ENCODE measurements at regions of chrX and their contacts with region 1.

Region 1: DNA sequence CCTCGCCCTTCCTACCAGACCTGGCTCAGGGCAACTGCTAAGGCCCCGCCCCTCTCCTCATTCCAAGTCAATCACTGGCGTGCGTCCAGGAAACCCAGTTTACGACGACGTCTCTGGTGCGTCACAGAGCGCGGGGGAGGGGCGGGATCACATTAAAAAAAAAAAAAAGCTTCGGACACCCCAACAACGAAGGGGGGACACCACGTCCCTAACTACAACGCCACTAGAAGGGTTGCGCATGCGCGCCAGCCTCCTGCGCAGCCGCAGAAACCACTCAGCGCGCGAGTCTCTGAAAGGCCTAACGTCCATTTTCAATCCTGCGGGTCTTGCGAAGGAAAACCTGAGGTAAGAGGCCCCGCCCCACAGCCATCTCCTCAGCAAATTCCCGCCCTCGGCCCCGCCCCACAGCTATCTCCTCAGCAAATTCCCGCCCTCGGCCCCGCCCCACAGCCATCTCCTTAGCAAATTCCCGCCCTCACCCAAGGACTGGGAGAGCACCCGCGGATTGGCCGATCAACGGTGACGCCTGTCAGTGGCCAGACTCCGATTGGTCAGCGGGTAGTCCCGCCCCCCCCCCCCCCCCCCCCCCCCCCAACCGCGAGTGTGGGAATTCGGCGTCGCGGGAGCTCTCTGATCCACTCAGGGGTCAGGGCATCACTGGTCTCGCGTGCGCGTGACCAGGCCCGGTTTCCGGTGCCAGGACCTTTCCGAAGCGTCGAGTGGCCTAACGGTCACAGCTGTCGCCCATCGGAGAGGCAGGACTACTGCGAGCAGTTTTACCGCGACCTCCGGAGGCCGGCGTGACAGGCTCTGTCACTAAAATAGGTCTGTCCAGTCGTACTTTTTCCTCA is at the start of gene SCML1:
- DNase-seq: peak; percentile 94 to 95
- H3K4me3 ChIP-seq: peak within 1 kb of the TSS; percentile 94
- H3K27ac ChIP-seq: peak within 1 kb of the TSS; percentile 85
- H3K4me1 ChIP-seq: peaks cover 14% of the 10 kb centered on the region; the same call in 1 of the 2 replicates
- H3K27me3 ChIP-seq: no peaks in the 10 kb centered on the region
- CTCF ChIP-seq: no peak
- total RNA-seq, gene SCML1: 6.6 and 9.3 TPM in 2 replicates

Region 2: DNA sequence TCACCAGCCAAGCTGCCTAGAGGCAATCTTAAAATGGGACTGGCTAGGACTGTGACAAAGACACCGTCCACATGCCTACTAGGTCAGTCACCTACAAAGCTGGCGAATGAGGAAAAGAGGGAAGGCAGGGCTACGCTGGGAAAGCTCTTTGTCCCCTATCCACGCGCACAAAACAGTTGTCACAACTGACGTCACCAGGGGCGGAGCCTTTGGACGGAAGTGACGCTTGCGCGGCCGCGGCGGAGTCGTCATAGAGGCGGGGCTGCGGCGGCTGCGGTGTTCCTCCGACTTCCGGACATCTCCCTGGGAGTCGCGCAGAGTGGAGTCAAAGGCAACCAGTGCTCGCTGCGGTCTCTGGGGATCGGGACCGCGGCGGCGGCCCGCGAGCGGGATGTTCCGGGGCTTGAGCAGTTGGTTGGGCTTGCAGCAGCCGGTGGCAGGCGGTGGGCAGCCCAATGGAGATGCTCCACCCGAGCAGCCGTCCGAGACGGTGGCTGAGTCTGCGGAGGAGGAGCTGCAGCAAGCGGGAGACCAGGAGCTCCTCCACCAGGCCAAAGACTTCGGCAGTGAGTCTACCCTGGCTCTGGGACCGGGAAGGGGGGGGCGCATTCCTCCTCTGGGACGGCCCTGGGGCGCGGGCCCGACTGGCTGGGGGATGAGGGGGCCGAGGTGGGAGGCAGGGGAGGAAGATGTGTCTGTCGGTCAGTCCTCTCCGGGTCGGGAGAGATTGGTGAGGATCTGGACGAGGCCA is 1017.6 kb before region 1 on chrX and contains the start of gene SYAP1:
- CTCF ChIA-PET with region 1: no interaction called
- POLR2A ChIA-PET with region 1: no interaction called
- intact Hi-C with region 1: loop called (anchors 2 kb)
- DNase-seq: peak; percentile 94 to 96
- H3K4me3 ChIP-seq: peak within 1 kb of the TSS; percentile 73
- H3K27ac ChIP-seq: peak within 1 kb of the TSS; percentile 98
- H3K4me1 ChIP-seq: 0 out of 2 replicates have a peak, but pooled peaks cover 6% of the 10 kb centered on the region
- H3K27me3 ChIP-seq: no peaks in the 10 kb centered on the region
- CTCF ChIP-seq: no peak
- total RNA-seq, gene SYAP1: 29.0 and 41.2 TPM in 2 replicates

Region 3: GRCh38 chrX:17336377-17336776 is 400.7 kb before region 1 on chrX:
- CTCF ChIA-PET with region 1: no interaction called
- POLR2A ChIA-PET with region 1: no interaction called
- intact Hi-C with region 1: no loop called
- DNase-seq: no peak
- H3K4me3 ChIP-seq: no peak overlapping the region
- H3K27ac ChIP-seq: no peak overlapping the region
- H3K4me1 ChIP-seq: no peaks in the 10 kb centered on the region
- H3K27me3 ChIP-seq: no peaks in the 10 kb centered on the region
- CTCF ChIP-seq: no peak

Region 4: GRCh38 chrX:17697191-17697590 is 39.9 kb before region 1 on chrX:
- CTCF ChIA-PET with region 1: no interaction called
- POLR2A ChIA-PET with region 1: no interaction called
- intact Hi-C with region 1: loop called (anchors 1 kb)
- DNase-seq: peak in 1 of 2 experiments; percentile 60
- H3K4me3 ChIP-seq: no peak overlapping the region
- H3K27ac ChIP-seq: no peak overlapping the region
- H3K4me1 ChIP-seq: peaks cover 22% of the 10 kb centered on the region
- H3K27me3 ChIP-seq: no peaks in the 10 kb centered on the region
- CTCF ChIP-seq: no peak

Region 5: DNA sequence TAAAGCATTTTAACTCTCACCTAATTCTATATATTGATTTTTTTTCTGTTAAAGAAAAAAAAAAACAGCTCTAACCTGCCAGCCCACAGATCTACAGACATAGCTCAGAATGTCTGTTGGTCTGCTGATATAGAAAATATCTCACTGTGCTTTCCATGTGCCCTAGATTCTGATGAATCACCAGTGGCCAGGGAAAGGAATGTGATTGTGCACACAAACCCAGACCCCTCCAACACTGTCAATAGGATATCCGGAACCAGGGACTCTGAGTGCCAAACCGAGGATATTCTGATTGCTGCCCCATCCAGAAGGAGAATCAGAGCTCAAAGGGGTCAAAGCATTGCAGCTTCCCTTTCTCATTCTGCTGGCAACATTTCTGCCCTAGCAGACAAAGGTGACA is 11.9 kb before region 1 on chrX:
- CTCF ChIA-PET with region 1: no interaction called
- POLR2A ChIA-PET with region 1: interaction called, 26 read pairs
- intact Hi-C with region 1: no loop called
- DNase-seq: no peak
- H3K4me3 ChIP-seq: no peak overlapping the region
- H3K27ac ChIP-seq: no peak overlapping the region
- H3K4me1 ChIP-seq: no peaks in the 10 kb centered on the region
- H3K27me3 ChIP-seq: no peaks in the 10 kb centered on the region
- CTCF ChIP-seq: no peak

Region 6: DNA sequence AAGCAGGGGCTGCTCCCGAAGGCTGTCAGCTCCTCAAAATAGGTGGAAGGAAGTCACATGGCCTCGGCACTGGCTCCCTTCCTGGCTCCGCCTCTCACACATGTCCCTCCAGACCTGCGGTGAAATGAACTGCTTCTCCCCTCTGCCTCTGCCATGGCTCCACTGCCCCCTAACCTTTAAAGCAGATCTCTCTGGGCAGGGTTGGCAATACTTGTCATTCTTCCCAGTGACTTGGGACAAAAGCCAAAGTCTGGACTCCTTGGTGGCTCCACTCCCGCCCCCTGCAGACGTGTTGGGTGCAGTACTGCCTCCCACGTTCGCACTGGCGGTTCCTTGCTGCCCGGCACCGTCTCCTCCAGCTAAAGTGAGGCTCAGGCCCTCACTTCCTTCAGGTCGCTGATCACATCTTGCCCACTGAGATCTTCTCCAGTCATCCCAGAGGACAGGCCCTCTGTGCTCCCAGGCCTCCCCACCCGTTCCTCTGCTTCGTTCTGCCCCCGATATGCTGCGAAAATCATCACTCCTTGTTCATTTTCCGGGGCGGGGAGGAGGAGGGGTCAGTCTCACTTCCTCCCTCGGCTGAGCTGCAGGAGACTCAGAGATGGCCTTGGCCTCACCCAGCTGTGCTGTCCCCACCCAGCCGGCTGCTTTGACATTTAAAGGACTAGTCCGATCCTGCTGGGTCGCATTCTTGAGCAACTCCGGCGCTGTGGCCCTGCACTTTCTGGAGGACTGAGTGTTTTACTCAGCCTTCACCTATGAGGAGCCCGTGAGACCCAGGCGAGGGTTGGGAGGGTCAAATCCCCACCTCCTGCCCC is 1149.5 kb after region 1 on chrX:
- CTCF ChIA-PET with region 1: interaction called, 11 read pairs
- POLR2A ChIA-PET with region 1: no interaction called
- intact Hi-C with region 1: no loop called
- DNase-seq: peak; percentile 76 to 80
- H3K4me3 ChIP-seq: peak overlapping the region; percentile 51
- H3K27ac ChIP-seq: no peak overlapping the region
- H3K4me1 ChIP-seq: peaks cover 8% of the 10 kb centered on the region; the same call in 1 of the 2 replicates
- H3K27me3 ChIP-seq: no peaks in the 10 kb centered on the region
- CTCF ChIP-seq: peak; percentile 68

Region 7: DNA sequence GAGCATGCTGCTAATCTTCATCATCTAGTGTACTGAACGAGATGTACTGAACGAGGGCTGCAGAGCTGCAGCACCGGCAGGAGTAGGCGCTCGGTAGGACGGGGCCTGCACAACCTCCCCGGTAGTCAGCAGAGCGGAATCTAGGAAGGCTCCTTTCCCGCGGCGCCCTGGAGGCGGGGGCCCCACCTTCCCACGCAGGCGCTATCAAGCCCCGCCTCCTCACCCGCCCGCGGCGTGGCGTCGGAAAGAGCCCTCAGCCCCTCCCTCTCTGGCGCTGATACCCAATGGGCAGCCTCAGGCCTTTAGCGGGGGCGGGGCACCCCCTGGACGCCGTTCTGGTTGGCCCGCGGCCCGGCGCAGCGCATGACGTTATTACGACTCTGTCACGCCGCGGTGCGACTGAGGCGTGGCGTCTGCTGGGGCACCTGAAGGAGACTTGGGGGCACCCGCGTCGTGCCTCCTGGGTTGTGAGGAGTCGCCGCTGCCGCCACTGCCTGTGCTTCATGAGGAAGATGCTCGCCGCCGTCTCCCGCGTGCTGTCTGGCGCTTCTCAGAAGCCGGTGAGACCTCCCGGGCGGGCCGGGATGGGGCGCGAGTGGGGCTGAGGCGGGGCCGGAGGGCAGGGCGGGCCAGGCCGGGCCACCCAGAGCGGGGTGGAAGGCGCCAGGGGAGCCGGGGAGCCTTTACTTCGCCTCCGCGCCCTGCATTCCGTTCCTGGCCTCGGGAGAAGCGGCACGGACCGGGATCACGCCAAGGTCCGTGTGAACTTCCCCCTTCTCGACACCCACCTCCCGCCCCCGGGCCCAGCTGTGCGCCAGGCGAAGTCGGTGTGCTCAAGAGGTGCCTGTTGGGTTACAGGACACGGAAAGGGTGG is 1606.7 kb after region 1 on chrX and contains the start of gene PDHA1:
- CTCF ChIA-PET with region 1: no interaction called
- POLR2A ChIA-PET with region 1: no interaction called
- intact Hi-C with region 1: loop called (anchors 5 kb)
- DNase-seq: peak; percentile 84 to 95
- H3K4me3 ChIP-seq: peak within 1 kb of the TSS; percentile 86
- H3K27ac ChIP-seq: no peak within 1 kb of the TSS
- H3K4me1 ChIP-seq: peaks cover 9% of the 10 kb centered on the region; the same call in 1 of the 2 replicates
- H3K27me3 ChIP-seq: no peaks in the 10 kb centered on the region
- CTCF ChIP-seq: no peak
- total RNA-seq, gene PDHA1: 193 and 199 TPM in 2 replicates